ENCODE measurements at regions of chr12 and their contacts with region 1.

Region 1: GRCh38 chr12:55996715-55997534 is at the start of gene SUOX:
- DNase-seq: peak; percentile 98
- ATAC-seq: peak; percentile 99
- total RNA-seq, gene SUOX: 28.1 TPM

Region 2: GRCh38 chr12:56029666-56030293 is 32.9 kb after region 1 on chr12:
- intact Hi-C with region 1: loop called (anchors 1 kb)
- DNase-seq: no peak
- ATAC-seq: no peak

Region 3: DNA sequence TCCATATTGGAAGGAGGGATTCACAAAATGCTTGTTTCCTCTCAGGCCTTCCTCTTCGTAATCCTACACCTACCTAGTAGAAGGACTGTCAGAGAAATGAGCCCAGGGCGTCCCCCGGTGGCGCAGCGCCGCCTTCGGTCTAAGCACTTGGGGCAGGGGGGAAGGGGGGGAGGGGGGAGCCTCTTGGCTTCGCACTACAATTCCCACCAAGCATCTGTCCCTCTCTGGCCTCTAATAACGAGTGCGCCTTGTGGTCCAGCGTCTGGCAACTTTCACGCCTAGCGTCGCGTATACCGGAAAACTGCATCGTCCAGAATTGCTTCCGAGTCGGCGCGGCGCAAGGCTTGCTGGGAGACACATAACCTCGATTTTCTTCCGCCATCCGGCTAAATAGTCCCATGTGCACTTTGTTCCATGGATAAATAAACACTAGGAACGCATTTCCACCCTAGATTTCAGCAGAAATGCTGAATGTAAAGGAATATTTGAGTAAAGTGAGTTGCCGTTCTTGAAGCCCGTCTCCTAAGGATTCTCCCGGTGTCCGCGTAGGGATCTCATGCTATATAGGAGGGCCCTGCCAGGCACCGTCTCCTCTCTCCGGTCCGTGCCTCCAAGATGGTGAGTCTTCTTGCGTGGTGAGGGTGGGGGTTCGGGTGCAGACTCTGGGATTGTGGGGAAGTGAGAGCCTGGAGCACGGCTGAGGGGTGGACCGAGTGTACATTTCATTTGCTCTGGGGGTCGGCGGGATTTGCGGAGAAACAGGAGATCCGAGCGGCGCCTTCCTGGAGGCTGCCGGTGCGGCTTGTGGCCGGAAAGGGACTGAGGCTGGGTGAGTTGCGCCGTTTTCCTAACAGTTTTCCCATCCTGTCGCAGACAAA is 44.9 kb after region 1 on chr12 and contains the start of gene RPS26:
- intact Hi-C with region 1: loop called (anchors 2 kb)
- DNase-seq: peak; percentile 97
- ATAC-seq: peak; percentile 97
- total RNA-seq, gene RPS26: 35.5 TPM

Region 4: DNA sequence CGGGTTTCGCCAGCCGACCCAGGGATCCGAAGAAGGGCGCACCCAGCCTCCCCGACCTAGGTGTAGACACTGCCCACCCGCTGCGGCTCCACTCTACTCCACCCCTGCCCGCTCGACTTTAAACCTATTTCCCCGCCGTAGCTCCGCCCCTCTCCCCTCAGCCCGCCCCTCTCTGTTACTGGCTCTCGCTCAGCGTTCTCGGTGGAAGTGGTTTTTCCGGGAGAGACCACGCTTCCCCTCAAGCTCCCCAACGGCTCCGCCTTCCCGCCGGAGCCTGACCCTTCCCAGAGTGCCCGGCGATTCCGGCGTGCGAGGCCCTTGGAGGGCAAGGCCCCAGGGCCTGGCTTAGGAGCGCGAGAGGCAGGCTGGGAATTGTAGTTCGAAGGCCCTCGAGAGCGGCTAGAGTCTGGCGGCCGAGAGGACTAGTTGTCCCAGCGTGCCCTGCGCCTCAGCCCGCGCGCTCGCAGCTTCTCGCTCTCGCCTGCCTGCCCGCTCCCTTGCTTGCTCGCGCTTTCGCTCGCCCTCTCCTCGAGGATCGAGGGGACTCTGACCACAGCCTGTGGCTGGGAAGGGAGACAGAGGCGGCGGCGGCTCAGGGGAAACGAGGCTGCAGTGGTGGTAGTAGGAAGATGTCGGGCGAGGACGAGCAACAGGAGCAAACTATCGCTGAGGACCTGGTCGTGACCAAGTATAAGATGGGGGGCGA is 107.3 kb after region 1 on chr12 and contains the start of gene PA2G4:
- intact Hi-C with region 1: loop called (anchors 5 kb)
- DNase-seq: peak; percentile 99
- ATAC-seq: peak; percentile 99
- total RNA-seq, gene PA2G4: 69.7 TPM

Measured in Right ventricle myocardium inferior (tissue), 1 donor.